ENCODE measurements at regions of chr16 and their contacts with region 1.

Region 1: DNA sequence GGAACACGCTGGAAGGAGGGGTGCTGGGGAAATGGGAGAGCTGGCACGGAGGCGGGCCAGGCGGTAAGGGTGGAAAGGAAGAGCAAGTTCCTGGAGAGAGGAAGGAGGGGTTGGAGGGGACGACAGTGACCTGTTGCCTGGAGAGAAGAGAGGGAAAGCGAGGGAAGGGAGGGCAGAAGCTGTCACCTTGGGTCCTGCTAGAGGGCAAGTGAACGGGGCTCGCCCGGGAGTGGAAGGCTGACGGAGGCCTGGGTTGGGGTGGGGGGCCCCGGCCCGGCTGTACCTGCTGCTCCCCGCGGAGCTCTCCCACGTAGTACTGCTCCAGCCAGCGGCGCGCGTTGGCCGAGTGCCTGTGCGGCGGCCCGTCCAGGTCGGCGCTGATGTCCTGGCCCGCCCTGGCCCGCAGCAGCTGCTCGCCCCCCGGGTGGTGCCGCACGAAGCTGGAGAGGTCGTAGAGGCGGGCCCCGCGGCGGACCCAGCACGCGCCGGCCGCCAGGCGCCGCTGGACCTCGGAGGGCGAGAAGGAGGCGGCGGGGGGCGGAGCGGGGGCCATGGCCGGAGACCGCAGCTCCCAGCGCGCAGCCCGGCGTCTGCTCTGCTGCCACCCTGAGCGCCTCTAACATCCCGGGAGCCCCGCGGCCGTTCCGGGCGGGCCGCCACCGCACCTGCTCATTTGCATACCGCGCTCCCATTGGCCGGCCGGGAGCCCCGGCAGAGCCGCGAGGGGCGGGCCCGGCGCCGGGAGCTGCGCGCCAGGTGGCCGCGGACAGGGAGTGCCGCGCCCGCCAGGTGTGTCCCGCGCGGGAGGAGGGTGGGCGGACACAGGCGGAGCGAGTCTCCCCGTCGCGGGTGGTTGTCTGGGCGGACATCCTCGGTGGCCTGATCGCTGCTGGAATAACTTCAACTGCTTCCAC is at the start of gene FA2H:
- DNase-seq: peak; percentile 51 to 77 (median 66)
- H3K4me3 ChIP-seq: peak within 1 kb of the TSS; percentile 21 to 78 (median 59)
- H3K27ac ChIP-seq: no peak within 1 kb of the TSS
- H3K4me1 ChIP-seq: peaks cover 2 to 15% (median 15%) of the 10 kb centered on the region in 4 experiments
- H3K27me3 ChIP-seq: peaks cover 0 to 20% (median 6%) of the 10 kb centered on the region in 5 experiments

Region 2: DNA sequence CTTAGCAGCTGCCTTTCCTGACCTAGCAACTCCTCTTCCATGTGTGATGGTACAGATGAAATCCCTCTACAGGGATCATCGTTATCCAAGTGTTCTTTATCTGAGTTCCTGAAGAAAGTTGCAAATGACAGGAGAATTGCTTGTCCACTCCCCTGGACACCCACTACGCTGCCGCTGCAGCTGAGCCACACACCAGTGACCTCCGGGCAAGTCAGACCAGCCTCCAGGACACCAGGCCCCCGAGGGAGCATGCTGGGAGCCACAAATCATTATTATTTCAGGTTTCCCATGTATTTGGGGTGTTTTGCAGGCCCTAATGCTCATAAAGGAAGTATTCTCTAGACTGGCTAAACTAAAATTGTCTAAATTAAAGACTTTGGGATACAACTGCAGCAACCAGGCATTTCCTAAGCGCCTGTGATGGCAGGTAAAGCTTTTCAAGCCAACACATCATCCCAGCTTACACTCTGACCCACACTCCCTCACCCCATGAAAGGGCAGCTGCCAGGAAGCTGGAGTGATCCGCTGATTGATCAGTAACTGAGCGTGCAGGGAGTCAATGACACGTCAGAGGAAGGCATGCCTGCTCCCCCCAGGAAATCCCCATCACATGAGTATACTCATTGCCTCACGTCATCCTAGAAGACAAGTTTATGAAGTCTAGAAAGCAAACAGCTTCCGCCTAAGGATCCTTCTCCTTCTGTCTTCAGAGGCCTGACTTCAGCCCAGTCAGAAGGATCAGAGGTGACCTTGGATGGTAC is 14.3 kb before region 1 on chr16:
- CTCF ChIA-PET with region 1: no interaction called
- POLR2A ChIA-PET with region 1: no interaction called
- DNase-seq: no peak
- H3K4me3 ChIP-seq: no peak overlapping the region
- H3K27ac ChIP-seq: no peak overlapping the region
- H3K4me1 ChIP-seq: no peaks in the 10 kb centered on the region
- H3K27me3 ChIP-seq: no peaks in the 10 kb centered on the region

Region 3: GRCh38 chr16:74785031-74785430 is 10.6 kb after region 1 on chr16:
- CTCF ChIA-PET with region 1: interaction called, 10 read pairs
- POLR2A ChIA-PET with region 1: no interaction called
- DNase-seq: no peak
- H3K4me3 ChIP-seq: no peak overlapping the region
- H3K27ac ChIP-seq: no peak overlapping the region
- H3K4me1 ChIP-seq: no peaks in the 10 kb centered on the region
- H3K27me3 ChIP-seq: no peaks in the 10 kb centered on the region

Region 4: DNA sequence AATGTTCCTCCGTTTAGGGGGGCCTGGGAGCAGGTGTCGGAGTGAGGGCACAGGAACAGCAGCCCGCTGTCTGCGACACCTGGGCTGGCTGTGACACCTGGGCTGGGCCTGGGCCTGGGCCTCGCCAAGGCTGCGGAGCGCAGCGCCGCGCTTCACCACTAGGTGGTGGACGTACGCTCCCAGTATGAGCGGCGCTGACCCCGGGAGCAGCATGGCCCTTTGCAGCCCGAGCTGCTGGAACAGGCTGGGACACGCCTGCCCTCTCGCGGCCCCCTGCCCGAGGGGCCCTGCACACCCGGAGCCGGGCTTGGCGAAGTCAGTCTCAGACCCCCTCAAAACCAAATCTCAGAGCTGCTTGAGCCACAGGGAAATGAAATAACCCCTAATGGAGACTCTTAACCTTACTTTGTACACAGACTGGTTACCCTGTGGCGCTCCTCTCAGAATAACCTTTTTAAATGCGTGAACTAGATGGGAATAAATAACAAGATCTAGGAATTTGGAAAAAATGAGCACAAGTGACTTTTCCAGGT is 38.7 kb after region 1 on chr16:
- CTCF ChIA-PET with region 1: interaction called, 11 read pairs
- POLR2A ChIA-PET with region 1: no interaction called
- DNase-seq: peak; percentile 75 to 80 (median 76)
- H3K4me3 ChIP-seq: peak overlapping the region in 2 of 7 experiments; percentile 8 to 48
- H3K27ac ChIP-seq: no peak overlapping the region
- H3K4me1 ChIP-seq: peaks cover 0 to 5% (median 1%) of the 10 kb centered on the region in 4 experiments
- H3K27me3 ChIP-seq: no peaks in the 10 kb centered on the region

Measured in common myeloid progenitor, CD34-positive (primary cell).